ENCODE measurements at regions of chr20 and their contacts with region 1.

Region 1: DNA sequence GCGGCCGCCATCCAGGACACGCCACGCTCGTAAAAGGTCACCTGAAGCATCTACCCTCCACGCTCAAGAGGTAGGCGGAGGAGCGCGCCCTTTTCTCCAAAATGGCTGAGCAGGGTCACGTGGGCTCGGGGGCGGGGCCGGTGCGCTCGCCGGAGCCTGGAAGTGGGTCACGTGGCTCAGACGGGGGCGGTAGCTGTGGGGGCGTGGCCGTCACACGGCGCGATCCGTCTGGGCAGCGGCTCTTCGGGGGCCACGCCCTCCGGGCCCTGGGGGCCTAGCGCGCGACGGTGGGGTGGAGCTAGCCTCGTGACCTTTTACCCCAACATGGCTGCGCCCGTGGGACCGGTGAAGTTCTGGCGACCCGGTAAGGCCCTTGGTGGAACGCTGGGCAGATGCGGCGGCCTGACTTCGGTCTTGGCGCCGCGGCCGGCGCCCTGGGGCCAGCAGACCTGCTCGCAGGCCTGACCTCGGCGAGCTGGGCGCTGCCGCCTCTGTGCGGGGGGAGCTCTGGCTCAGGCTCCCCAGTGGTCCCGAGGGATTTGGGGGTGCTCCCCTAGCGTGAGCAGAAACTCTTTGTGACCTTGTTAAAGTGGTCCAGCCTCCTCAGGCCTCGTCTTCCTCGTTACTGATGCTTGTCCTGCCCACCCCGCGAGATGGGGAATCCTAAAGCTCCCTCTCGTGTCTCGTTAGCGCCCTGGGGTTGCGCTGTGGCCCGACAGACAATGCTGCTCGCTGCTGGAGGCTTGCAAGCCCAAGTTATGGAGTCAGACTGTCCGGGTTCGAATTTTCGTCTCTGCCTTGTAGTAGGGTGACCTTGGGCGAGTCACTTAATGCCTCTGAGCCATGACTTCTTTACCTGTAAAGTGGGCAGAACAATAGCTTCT is at the start of gene DHX35:
- DNase-seq: peak; percentile 96 to 99 (median 98)
- ATAC-seq: peak; percentile 100
- H3K4me3 ChIP-seq: peak within 1 kb of the TSS; percentile 97
- H3K4me3 Mint-ChIP-seq: peak within 1 kb of the TSS; percentile 92 to 97 (median 96)
- H3K27ac ChIP-seq: peak within 1 kb of the TSS; percentile 80
- H3K27ac Mint-ChIP-seq: peak within 1 kb of the TSS; percentile 92 to 98 (median 96)
- H3K4me1 ChIP-seq: peaks cover 6 to 16% of the 10 kb centered on the region in 2 donors
- H3K4me1 Mint-ChIP-seq: peaks cover 16 to 46% (median 34%) of the 10 kb centered on the region in 7 donors
- H3K27me3 ChIP-seq: no peaks in the 10 kb centered on the region
- H3K27me3 Mint-ChIP-seq: no peaks in the 10 kb centered on the region
- total RNA-seq, gene DHX35: 8.0 to 13.3 (median 10.6) TPM

Region 2: GRCh38 chr20:38472513-38473372 is 489.5 kb before region 1 on chr20 and contains the start of gene RALGAPB:
- CTCF ChIA-PET with region 1: no interaction called
- POLR2A ChIA-PET with region 1: no interaction called
- intact Hi-C with region 1: loop called in 1 of 2 experiments (anchors 1 kb)
- DNase-seq: peak; percentile 96 to 99 (median 98)
- ATAC-seq: peak; percentile 95
- H3K4me3 ChIP-seq: peak within 1 kb of the TSS; percentile 57
- H3K4me3 Mint-ChIP-seq: peak within 1 kb of the TSS; percentile 87 to 94 (median 92)
- H3K27ac ChIP-seq: peak within 1 kb of the TSS; percentile 80
- H3K27ac Mint-ChIP-seq: peak within 1 kb of the TSS; percentile 87 to 97 (median 94)
- H3K4me1 ChIP-seq: peaks cover 21 to 24% of the 10 kb centered on the region in 2 donors
- H3K4me1 Mint-ChIP-seq: peaks cover 37 to 57% (median 52%) of the 10 kb centered on the region in 7 donors
- H3K27me3 ChIP-seq: no peaks in the 10 kb centered on the region
- H3K27me3 Mint-ChIP-seq: peaks cover 0 to 14% (median 0%) of the 10 kb centered on the region in 5 donors
- total RNA-seq, gene RALGAPB: 36.8 to 50.4 (median 41.8) TPM

Region 3: GRCh38 chr20:38907918-38908677 is 54.2 kb before region 1 on chr20:
- CTCF ChIA-PET with region 1: no interaction called
- POLR2A ChIA-PET with region 1: no interaction called
- intact Hi-C with region 1: no loop called
- DNase-seq: no peak
- ATAC-seq: no peak
- H3K4me3 ChIP-seq: no peak overlapping the region
- H3K4me3 Mint-ChIP-seq: no peak overlapping the region
- H3K27ac ChIP-seq: no peak overlapping the region
- H3K27ac Mint-ChIP-seq: peak overlapping the region in 1 of 9 donors; percentile 53
- H3K4me1 ChIP-seq: no peaks in the 10 kb centered on the region
- H3K4me1 Mint-ChIP-seq: peaks cover 0 to 7% (median 0%) of the 10 kb centered on the region in 7 donors
- H3K27me3 ChIP-seq: no peaks in the 10 kb centered on the region
- H3K27me3 Mint-ChIP-seq: no peaks in the 10 kb centered on the region

Region 4: GRCh38 chr20:38926142-38926933 is 35.9 kb before region 1 on chr20 and contains the start of gene FAM83D:
- CTCF ChIA-PET with region 1: interaction called, 8 read pairs
- POLR2A ChIA-PET with region 1: interaction called, 24 read pairs
- intact Hi-C with region 1: loop called (anchors 1 kb)
- DNase-seq: peak; percentile 86 to 98 (median 92)
- ATAC-seq: peak; percentile 97
- H3K4me3 ChIP-seq: peak within 1 kb of the TSS; percentile 61
- H3K4me3 Mint-ChIP-seq: peak within 1 kb of the TSS; percentile 76 to 90 (median 80)
- H3K27ac ChIP-seq: peak within 1 kb of the TSS; percentile 64
- H3K27ac Mint-ChIP-seq: peak within 1 kb of the TSS in 8 of 9 donors; percentile 27 to 83 (median 72)
- H3K4me1 ChIP-seq: peaks cover 5 to 22% of the 10 kb centered on the region in 2 donors
- H3K4me1 Mint-ChIP-seq: peaks cover 6 to 43% (median 17%) of the 10 kb centered on the region in 7 donors
- H3K27me3 ChIP-seq: no peaks in the 10 kb centered on the region
- H3K27me3 Mint-ChIP-seq: no peaks in the 10 kb centered on the region
- total RNA-seq, gene FAM83D: 1.4 to 11.1 (median 1.8) TPM

Region 5: GRCh38 chr20:39004508-39004907 is 42.2 kb after region 1 on chr20:
- CTCF ChIA-PET with region 1: no interaction called
- POLR2A ChIA-PET with region 1: no interaction called
- intact Hi-C with region 1: loop called in 1 of 2 experiments (anchors 1 kb)
- DNase-seq: peak in 6 of 9 donors; percentile 11 to 51 (median 36)
- ATAC-seq: peak; percentile 50
- H3K4me3 ChIP-seq: no peak overlapping the region
- H3K4me3 Mint-ChIP-seq: peak overlapping the region in 4 of 10 donors; percentile 45 to 58 (median 48)
- H3K27ac ChIP-seq: no peak overlapping the region
- H3K27ac Mint-ChIP-seq: peak overlapping the region in 6 of 9 donors; percentile 25 to 84 (median 57)
- H3K4me1 ChIP-seq: peaks cover 0 to 11% of the 10 kb centered on the region in 2 donors
- H3K4me1 Mint-ChIP-seq: peaks cover 14 to 42% (median 32%) of the 10 kb centered on the region in 7 donors
- H3K27me3 ChIP-seq: no peaks in the 10 kb centered on the region
- H3K27me3 Mint-ChIP-seq: no peaks in the 10 kb centered on the region